ENCODE measurements at regions of chr6 and their contacts with region 1.

Region 1: GRCh38 chr6:26342106-26343004 is 22.6 kb upstream of the BTN3A2 start:
- DNase-seq: no peak
- H3K4me3 ChIP-seq: peak overlapping the region; percentile 39 to 40
- H3K4me3 Mint-ChIP-seq: peak overlapping the region; percentile 68 to 86 (median 86)
- H3K27ac ChIP-seq: no peak overlapping the region
- H3K27ac Mint-ChIP-seq: peak overlapping the region in 5 of 7 donors; percentile 42 to 91 (median 52)
- H3K4me1 ChIP-seq: peaks cover 11% of the 10 kb centered on the region
- H3K4me1 Mint-ChIP-seq: peaks cover 6 to 8% (median 7%) of the 10 kb centered on the region in 4 donors
- H3K27me3 ChIP-seq: no peaks in the 10 kb centered on the region
- H3K27me3 Mint-ChIP-seq: no peaks in the 10 kb centered on the region

Region 2: DNA sequence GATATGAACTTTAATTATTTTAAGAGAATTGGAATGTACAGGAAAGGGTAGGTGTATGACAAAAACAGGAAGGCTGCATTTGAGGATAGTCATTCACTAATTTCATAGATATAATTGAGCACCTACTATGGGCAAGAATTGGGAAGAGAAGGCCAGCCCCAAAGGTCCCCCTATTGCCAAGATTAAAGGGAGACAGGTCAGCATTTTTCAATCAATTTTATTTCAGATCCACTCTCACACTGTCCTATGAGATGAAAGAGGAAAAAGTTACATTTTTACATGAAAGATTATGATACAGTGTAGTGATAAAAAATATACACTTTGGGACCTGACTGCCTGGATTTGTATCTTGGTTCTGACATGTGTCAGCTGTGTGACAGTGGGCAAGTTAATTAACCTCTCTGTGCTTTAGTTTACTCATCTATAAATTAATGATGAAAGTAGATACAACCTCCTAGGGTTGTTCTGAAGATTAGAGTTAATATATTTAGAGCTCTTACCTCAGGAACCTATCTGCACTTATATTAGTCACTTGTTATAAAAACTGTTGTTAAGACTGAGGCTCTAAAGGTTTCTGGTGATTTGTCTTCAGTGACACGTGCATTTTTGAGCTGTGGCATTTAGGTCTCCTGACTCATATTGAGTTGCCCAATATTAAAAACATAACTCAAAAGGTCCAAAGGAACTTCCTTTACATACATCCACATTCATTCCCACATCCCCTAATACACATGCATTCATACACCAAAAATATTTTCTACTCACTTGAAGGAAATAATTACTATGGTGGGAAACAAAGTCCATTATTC is 644.6 kb before region 1 on chr6:
- CTCF ChIA-PET with region 1: no interaction called
- POLR2A ChIA-PET with region 1: no interaction called
- intact Hi-C with region 1: no loop called
- DNase-seq: no peak
- H3K4me3 ChIP-seq: no peak overlapping the region
- H3K4me3 Mint-ChIP-seq: no peak overlapping the region
- H3K27ac ChIP-seq: no peak overlapping the region
- H3K27ac Mint-ChIP-seq: no peak overlapping the region
- H3K4me1 ChIP-seq: no peaks in the 10 kb centered on the region
- H3K4me1 Mint-ChIP-seq: no peaks in the 10 kb centered on the region
- H3K27me3 ChIP-seq: no peaks in the 10 kb centered on the region
- H3K27me3 Mint-ChIP-seq: peaks cover 6 to 8% of the 10 kb centered on the region in 2 donors

Region 3: DNA sequence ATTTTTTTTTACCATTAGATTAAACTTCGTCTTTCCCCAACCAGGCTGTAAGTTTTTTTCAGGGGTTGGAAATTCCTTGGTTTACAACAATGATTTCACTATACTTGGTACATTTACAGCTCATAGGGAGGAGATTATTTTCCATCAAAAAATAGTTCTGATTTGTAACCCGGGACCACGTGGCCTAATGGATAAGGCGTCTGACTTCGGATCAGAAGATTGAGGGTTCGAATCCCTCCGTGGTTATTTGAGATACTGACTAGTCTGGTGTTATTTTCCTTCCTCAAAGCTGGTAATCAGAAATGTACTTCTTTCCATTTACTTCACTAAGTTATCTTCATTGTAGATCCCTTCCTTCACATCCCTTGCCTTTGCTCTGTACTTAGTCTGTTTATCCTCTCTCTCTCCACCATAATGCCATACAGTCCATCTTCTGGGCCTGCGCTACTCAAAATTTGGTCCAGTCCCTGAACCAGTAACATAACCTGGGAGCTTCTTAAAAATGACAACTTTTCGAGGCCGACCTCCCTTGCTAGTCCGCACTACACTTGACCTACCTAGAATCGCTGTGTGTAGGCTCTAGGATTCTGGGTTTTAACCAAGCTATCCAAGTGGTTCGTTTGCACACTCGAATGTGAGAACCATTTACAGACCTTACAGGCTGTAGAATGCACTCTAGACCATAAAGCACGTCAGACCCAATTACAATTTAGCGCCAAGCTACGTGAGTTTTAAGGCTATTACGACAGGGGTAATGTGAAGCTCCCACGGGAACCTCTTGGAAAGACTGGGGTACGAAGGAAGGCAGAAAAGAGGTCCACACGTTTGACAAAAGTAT is 19.5 kb before region 1 on chr6:
- CTCF ChIA-PET with region 1: interaction called, 13 read pairs
- POLR2A ChIA-PET with region 1: interaction called, 4 read pairs
- intact Hi-C with region 1: no loop called
- DNase-seq: peak; percentile 75 to 80 (median 79)
- H3K4me3 ChIP-seq: peak overlapping the region in 1 of 2 donors; percentile 62
- H3K4me3 Mint-ChIP-seq: peak overlapping the region; percentile 86 to 92 (median 88)
- H3K27ac ChIP-seq: no peak overlapping the region
- H3K27ac Mint-ChIP-seq: peak overlapping the region; percentile 42 to 98 (median 82)
- H3K4me1 ChIP-seq: peaks cover 12% of the 10 kb centered on the region
- H3K4me1 Mint-ChIP-seq: peaks cover 19 to 30% (median 24%) of the 10 kb centered on the region in 4 donors
- H3K27me3 ChIP-seq: no peaks in the 10 kb centered on the region
- H3K27me3 Mint-ChIP-seq: peaks cover 8 to 22% of the 10 kb centered on the region in 2 donors

Region 4: GRCh38 chr6:26363882-26364701 is 21.7 kb after region 1 on chr6:
- CTCF ChIA-PET with region 1: interaction called, 17 read pairs
- POLR2A ChIA-PET with region 1: no interaction called
- intact Hi-C with region 1: loop called (anchors 1 kb)
- DNase-seq: peak in 3 of 5 donors; percentile 40 to 44 (median 43)
- H3K4me3 ChIP-seq: peak overlapping the region; percentile 79 to 87
- H3K4me3 Mint-ChIP-seq: peak overlapping the region in 1 of 8 donors; percentile 21
- H3K27ac ChIP-seq: peak overlapping the region; percentile 96
- H3K27ac Mint-ChIP-seq: no peak overlapping the region
- H3K4me1 ChIP-seq: peaks cover 69% of the 10 kb centered on the region
- H3K4me1 Mint-ChIP-seq: peaks cover 45 to 56% (median 52%) of the 10 kb centered on the region in 4 donors
- H3K27me3 ChIP-seq: no peaks in the 10 kb centered on the region
- H3K27me3 Mint-ChIP-seq: no peaks in the 10 kb centered on the region

Region 5: GRCh38 chr6:26520853-26521599 is 178.7 kb after region 1 on chr6:
- CTCF ChIA-PET with region 1: no interaction called
- POLR2A ChIA-PET with region 1: interaction called, 3 read pairs
- intact Hi-C with region 1: loop called (anchors 5 kb)
- DNase-seq: peak; percentile 87 to 89 (median 88)
- H3K4me3 ChIP-seq: peak overlapping the region; percentile 64 to 69
- H3K4me3 Mint-ChIP-seq: peak overlapping the region; percentile 80 to 97 (median 92)
- H3K27ac ChIP-seq: peak overlapping the region; percentile 64
- H3K27ac Mint-ChIP-seq: peak overlapping the region; percentile 82 to 99 (median 96)
- H3K4me1 ChIP-seq: peaks cover 8% of the 10 kb centered on the region
- H3K4me1 Mint-ChIP-seq: peaks cover 27 to 44% (median 30%) of the 10 kb centered on the region in 4 donors
- H3K27me3 ChIP-seq: no peaks in the 10 kb centered on the region
- H3K27me3 Mint-ChIP-seq: peaks cover 1 to 2% of the 10 kb centered on the region in 2 donors

Region 6: DNA sequence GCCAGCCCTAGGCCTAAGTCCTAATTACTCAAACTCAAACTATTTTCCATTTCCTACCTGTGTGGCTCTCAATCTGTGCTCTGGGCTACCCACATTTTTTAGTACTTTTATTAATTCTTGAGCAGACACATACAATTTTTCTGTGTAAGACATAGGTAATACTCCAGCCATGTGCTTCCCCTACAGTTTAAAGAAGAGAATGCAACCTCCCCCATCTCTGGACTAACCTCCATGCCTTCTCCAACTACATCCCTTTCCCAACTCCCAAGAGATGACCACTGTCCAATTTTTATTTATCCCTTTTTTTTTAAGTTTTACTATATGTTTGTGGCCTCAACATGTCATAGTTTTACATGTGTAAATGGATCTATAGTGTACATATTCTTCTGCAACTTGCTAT is 201.6 kb after region 1 on chr6:
- CTCF ChIA-PET with region 1: interaction called, 10 read pairs
- POLR2A ChIA-PET with region 1: no interaction called
- intact Hi-C with region 1: loop called (anchors 1 kb)
- DNase-seq: peak in 2 of 5 donors; percentile 18 to 30
- H3K4me3 ChIP-seq: no peak overlapping the region
- H3K4me3 Mint-ChIP-seq: peak overlapping the region in 1 of 8 donors; percentile 3
- H3K27ac ChIP-seq: no peak overlapping the region
- H3K27ac Mint-ChIP-seq: peak overlapping the region in 6 of 7 donors; percentile 0 to 75 (median 27)
- H3K4me1 ChIP-seq: peaks cover 32% of the 10 kb centered on the region
- H3K4me1 Mint-ChIP-seq: peaks cover 27 to 46% (median 37%) of the 10 kb centered on the region in 4 donors
- H3K27me3 ChIP-seq: no peaks in the 10 kb centered on the region
- H3K27me3 Mint-ChIP-seq: no peaks in the 10 kb centered on the region

Region 7: DNA sequence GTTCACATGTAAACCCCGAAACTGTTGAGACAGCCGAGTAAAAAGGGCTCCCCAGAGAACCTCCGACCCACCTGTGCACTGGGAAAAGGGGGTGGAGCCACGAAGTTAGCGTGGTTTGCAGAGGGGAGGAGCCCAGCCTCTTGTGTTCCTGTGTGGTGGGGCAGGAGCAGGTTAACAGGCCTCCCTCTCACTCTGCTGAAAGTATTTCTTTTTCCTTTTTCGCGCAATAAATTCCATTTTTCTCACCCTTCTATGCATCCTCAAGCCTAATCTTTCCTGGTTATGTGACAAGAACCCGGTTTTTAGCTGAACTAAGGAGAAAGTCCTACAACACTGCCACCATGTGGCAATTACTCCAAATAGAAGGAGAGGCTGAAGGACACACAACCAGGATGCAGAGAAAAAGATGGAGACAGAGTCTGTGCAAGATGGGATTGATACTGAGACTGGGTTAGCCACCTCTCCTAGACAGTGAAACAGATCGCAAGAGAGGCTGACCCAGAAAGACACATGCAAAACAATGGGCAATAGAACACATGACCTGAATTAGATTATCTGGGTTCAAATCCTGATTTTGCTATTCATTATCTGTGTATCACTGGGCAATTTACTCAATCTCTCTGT is 736.5 kb after region 1 on chr6:
- CTCF ChIA-PET with region 1: no interaction called
- POLR2A ChIA-PET with region 1: no interaction called
- intact Hi-C with region 1: loop called (anchors 10 kb)
- DNase-seq: peak; percentile 36 to 52 (median 46)
- H3K4me3 ChIP-seq: no peak overlapping the region
- H3K4me3 Mint-ChIP-seq: peak overlapping the region; percentile 35 to 82 (median 76)
- H3K27ac ChIP-seq: no peak overlapping the region
- H3K27ac Mint-ChIP-seq: no peak overlapping the region
- H3K4me1 ChIP-seq: peaks cover 5% of the 10 kb centered on the region
- H3K4me1 Mint-ChIP-seq: peaks cover 0 to 7% (median 5%) of the 10 kb centered on the region in 4 donors
- H3K27me3 ChIP-seq: peaks cover 10% of the 10 kb centered on the region
- H3K27me3 Mint-ChIP-seq: peaks cover 21 to 35% of the 10 kb centered on the region in 2 donors